Activated naive CD8-positive, alpha-beta T cell treated with anti-CD3 and anti-CD28 coated beads, Interleukin-2, amount 10 ng/mL, durations not matched to agents 7 days and 5 days (primary cell): ENCODE measurements at regions of chr2 and their contacts with region 1.

Region 1: DNA sequence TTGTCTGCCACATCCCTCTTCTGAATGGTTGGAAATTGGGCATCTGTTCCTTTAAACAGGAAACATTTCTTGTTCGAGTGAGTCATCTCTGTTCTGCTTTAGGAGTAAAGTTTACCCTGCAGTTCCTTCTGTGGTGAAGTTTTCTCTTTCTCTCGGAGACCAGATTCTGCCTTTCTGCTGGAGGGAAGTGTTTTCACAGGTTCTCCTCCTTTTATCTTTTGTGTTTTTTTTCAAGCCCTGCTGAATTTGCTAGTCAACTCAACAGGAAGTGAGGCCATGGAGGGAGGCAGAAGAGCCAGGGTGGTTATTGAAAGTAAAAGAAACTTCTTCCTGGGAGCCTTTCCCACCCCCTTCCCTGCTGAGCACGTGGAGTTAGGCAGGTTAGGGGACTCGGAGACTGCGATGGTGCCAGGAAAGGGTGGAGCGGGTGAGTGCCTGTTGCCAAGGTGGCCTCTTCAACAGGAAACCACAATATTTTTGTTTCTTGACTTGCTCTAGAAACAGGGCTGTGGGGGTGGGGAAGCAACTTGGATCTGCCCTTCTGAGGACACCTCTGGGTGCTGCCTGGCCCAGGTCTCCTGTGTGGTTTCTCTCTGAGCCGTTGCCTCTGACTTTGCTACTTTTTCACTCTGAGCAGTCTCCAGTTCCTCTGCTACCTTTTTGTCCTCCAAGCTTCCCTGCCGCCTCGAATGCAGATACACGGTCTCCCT is 2.2 kb upstream of the CASP8 start:
- DNase-seq: peak; percentile 80
- ATAC-seq: peak; percentile 70
- H3K4me3 Mint-ChIP-seq: peak overlapping the region; percentile 83
- H3K27ac Mint-ChIP-seq: peak overlapping the region; percentile 98
- H3K4me1 Mint-ChIP-seq: peaks cover 60% of the 10 kb centered on the region
- H3K27me3 Mint-ChIP-seq: no peaks in the 10 kb centered on the region

Region 2: DNA sequence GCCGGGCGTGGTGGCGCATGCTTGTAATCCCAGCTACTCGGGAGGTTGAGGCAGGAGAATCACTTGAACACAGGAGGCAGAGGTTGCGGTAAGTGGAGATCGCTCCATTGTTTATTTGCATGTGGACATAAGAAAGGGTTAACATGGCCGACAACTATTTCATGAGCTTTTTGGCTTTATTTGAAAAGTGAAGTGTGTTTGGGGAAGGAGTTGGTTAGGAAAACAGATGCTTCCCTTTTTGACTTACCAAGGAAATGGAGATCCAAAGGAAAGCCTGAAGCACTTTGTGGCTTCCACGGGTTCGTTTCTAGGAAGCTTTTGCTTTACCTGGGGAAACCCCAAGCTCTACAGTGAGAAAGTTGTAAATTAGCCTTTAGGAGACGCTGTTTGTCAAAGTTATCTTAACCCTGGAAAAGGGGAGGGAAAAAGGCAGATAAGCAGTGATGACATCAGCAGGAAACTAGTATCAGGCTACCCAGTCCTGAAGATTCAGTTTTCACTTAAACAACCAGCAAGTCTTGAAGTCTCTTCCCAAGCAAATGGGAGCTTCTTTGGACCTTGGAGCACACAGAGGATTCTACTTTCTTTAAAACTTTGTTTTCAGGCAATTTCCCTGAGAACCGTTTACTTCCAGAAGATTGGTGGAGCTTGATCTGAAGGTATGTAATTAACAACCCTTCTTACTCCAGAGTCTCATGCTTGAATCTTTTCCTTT is 75.3 kb before region 1 on chr2 and contains the start of gene CASP10:
- POLR2A ChIA-PET with region 1: interaction called, 20 read pairs
- DNase-seq: no peak
- ATAC-seq: peak; percentile 78
- H3K4me3 Mint-ChIP-seq: peak within 1 kb of the TSS; percentile 96
- H3K27ac Mint-ChIP-seq: peak within 1 kb of the TSS; percentile 92
- H3K4me1 Mint-ChIP-seq: peaks cover 41% of the 10 kb centered on the region
- H3K27me3 Mint-ChIP-seq: no peaks in the 10 kb centered on the region
- total RNA-seq, gene CASP10: 45.2 to 46.1 TPM

Region 3: DNA sequence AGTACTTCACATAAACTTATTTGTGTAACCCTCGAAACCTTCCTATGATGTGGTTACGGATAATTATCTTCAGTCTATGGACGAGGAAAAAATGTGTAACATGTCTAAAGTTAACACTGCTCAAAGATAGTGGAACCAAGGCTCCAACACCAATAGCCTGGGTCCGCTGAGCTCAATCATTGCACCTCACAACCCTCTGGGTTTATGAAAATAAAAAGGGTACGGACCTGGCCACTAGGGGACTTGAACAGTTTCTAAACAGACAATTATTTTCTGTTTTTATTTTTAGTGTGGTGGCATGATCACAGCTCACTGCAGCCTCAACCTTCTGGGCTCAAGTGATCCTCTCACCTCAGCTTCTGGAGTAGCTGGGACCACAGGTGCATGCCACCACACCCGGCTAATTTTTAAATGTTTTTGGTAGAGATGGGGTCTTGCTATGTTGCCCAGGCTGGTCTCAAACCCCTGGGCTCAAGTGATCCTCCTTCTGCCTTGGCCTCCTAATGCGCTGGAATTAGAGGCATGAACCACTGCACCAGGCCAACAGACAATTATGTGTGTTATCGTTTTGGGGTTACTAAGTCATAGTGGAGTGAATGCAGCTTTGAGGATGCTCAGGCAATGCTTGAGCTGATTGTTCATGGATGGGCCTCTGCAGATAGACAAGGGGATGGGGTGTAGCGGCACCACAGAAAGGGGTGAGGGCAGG is 12.3 kb after region 1 on chr2:
- POLR2A ChIA-PET with region 1: interaction called, 10 read pairs
- DNase-seq: no peak
- ATAC-seq: no peak
- H3K4me3 Mint-ChIP-seq: no peak overlapping the region
- H3K27ac Mint-ChIP-seq: no peak overlapping the region
- H3K4me1 Mint-ChIP-seq: peaks cover 27% of the 10 kb centered on the region
- H3K27me3 Mint-ChIP-seq: no peaks in the 10 kb centered on the region

Region 4: DNA sequence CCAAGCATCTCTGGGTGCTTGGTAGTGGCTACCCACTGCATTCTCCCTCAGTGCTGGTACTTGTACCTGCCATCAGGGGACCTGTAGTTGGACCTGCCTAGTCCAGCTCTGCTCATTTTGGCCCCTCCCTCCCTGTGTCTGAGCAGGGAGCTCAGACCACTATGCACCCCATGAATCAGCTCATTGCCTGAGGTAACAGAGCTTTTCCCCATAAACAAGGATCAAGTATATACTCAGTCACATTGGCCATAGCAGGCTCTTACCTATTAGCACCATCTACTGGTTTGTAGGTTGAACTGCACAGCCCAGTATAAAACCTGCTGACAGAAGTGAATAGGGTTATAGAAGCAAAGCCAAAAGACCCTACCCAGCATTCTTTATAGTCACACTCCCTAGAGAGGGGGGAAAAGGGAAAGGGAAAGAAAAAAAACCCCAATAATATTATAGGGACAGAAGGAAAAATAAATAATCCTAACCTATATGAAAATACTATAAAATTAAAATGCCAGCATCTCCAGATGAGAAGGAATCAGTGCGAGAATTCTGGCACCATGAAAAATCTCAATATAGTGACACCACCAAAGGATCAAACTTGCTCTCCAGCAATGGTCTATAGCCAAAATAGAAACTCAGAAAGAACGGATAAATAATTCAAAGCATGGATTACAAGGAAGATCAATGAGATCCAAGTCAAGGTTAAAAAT is 105.9 kb after region 1 on chr2:
- POLR2A ChIA-PET with region 1: interaction called, 10 read pairs
- DNase-seq: no peak
- ATAC-seq: peak; percentile 86
- H3K4me3 Mint-ChIP-seq: no peak overlapping the region
- H3K27ac Mint-ChIP-seq: peak overlapping the region; percentile 71
- H3K4me1 Mint-ChIP-seq: peaks cover 12% of the 10 kb centered on the region
- H3K27me3 Mint-ChIP-seq: no peaks in the 10 kb centered on the region

Region 5: GRCh38 chr2:201419986-201420385 is 161.9 kb after region 1 on chr2:
- POLR2A ChIA-PET with region 1: no interaction called
- DNase-seq: no peak
- ATAC-seq: no peak
- H3K4me3 Mint-ChIP-seq: no peak overlapping the region
- H3K27ac Mint-ChIP-seq: peak overlapping the region; percentile 53
- H3K4me1 Mint-ChIP-seq: peaks cover 27% of the 10 kb centered on the region
- H3K27me3 Mint-ChIP-seq: no peaks in the 10 kb centered on the region

Region 6: DNA sequence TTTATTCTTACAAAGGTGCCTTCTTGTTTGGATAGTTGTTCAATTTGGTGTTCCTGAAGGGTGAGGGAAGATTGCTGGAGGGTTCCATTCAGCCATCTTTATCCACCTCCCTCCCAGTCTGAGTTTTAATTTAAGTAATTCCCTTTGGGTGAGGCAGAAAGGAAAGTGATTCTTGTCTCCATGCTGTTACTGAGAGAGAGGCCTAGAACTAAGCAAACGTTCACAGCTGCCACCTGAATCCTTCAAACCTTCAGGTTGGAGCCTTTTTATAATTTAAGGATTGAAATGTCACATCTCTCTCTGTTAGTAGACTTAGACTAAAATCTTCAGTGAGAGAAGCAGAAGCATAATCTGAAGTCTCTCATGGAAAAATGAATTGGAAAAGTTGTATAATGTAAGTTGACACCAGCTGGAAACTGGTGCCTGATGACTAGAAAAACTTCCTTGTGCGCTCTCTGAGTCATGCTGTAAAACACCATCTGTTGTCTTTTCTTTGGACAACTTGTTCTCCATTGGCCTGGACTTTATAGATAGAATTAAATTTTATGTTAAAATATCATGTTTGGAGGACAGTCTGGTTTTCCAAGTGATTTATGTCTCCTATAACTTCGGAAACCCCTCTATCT is 208.1 kb after region 1 on chr2:
- POLR2A ChIA-PET with region 1: no interaction called
- DNase-seq: no peak
- ATAC-seq: no peak
- H3K4me3 Mint-ChIP-seq: no peak overlapping the region
- H3K27ac Mint-ChIP-seq: no peak overlapping the region
- H3K4me1 Mint-ChIP-seq: peaks cover 3% of the 10 kb centered on the region
- H3K27me3 Mint-ChIP-seq: no peaks in the 10 kb centered on the region

Region 7: GRCh38 chr2:201780674-201781581 is 522.8 kb after region 1 on chr2 and contains the start of gene ALS2:
- POLR2A ChIA-PET with region 1: interaction called, 11 read pairs
- DNase-seq: peak; percentile 97
- ATAC-seq: peak; percentile 95
- H3K4me3 Mint-ChIP-seq: peak within 1 kb of the TSS; percentile 98
- H3K27ac Mint-ChIP-seq: peak within 1 kb of the TSS; percentile 98
- H3K4me1 Mint-ChIP-seq: peaks cover 23% of the 10 kb centered on the region
- H3K27me3 Mint-ChIP-seq: peaks cover 11% of the 10 kb centered on the region
- total RNA-seq, gene ALS2: 15.3 to 16.7 TPM